ENCODE measurements at regions of chr3 and their contacts with region 1.

Region 1: GRCh38 chr3:115713284-115713683 is 90.0 kb downstream of the GAP43 start:
- DNase-seq: no peak
- H3K4me3 ChIP-seq: no peak overlapping the region
- H3K27ac ChIP-seq: no peak overlapping the region
- H3K4me1 ChIP-seq: no peaks in the 10 kb centered on the region
- H3K27me3 ChIP-seq: no peaks in the 10 kb centered on the region
- CTCF ChIP-seq: no peak

Region 2: GRCh38 chr3:114809668-114810413 is 903.4 kb before region 1 on chr3:
- CTCF ChIA-PET with region 1: interaction called, 10 read pairs
- POLR2A ChIA-PET with region 1: no interaction called
- intact Hi-C with region 1: no loop called
- DNase-seq: no peak
- H3K4me3 ChIP-seq: no peak overlapping the region
- H3K27ac ChIP-seq: no peak overlapping the region
- H3K4me1 ChIP-seq: no peaks in the 10 kb centered on the region
- H3K27me3 ChIP-seq: no peaks in the 10 kb centered on the region
- CTCF ChIP-seq: no peak

Region 3: GRCh38 chr3:115766587-115767480 is 53.5 kb after region 1 on chr3:
- CTCF ChIA-PET with region 1: no interaction called
- POLR2A ChIA-PET with region 1: no interaction called
- intact Hi-C with region 1: loop called (anchors 10 kb)
- DNase-seq: no peak
- H3K4me3 ChIP-seq: no peak overlapping the region
- H3K27ac ChIP-seq: no peak overlapping the region
- H3K4me1 ChIP-seq: peaks cover 14% of the 10 kb centered on the region; the same call in 1 of the 2 replicates
- H3K27me3 ChIP-seq: no peaks in the 10 kb centered on the region
- CTCF ChIP-seq: no peak